ENCODE measurements at regions of chr6 and their contacts with region 1.

Region 1: GRCh38 chr6:72619883-72620696 is 1.8 kb upstream of the KCNQ5 start:
- DNase-seq: peak; percentile 72
- ATAC-seq: peak; percentile 59
- H3K4me3 Mint-ChIP-seq: peak overlapping the region; percentile 89
- H3K27ac Mint-ChIP-seq: peak overlapping the region; percentile 92
- H3K4me1 Mint-ChIP-seq: peaks cover 52% of the 10 kb centered on the region
- H3K27me3 Mint-ChIP-seq: no peaks in the 10 kb centered on the region

Region 2: DNA sequence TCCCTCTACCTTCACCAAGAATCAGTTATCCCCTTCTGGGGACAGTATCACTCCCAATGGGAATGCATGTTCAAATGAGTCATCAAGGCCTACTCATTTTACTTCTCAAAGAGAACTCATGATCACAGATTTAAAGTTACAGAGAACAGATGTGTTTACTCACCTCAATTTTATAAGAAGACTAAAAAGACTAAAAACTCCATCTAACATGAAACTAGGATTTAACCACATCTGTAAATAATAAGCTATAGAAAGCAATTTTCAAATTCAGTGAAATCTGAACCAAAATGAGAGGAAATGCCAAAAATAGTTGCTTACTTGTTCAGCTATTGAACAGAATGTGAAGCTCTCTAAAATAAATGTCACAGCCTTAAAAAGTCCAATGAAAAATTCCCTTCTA is 298.3 kb before region 1 on chr6:
- CTCF ChIA-PET with region 1: no interaction called
- POLR2A ChIA-PET with region 1: no interaction called
- DNase-seq: no peak
- ATAC-seq: no peak
- H3K4me3 Mint-ChIP-seq: no peak overlapping the region
- H3K27ac Mint-ChIP-seq: no peak overlapping the region
- H3K4me1 Mint-ChIP-seq: no peaks in the 10 kb centered on the region
- H3K27me3 Mint-ChIP-seq: no peaks in the 10 kb centered on the region

Region 3: DNA sequence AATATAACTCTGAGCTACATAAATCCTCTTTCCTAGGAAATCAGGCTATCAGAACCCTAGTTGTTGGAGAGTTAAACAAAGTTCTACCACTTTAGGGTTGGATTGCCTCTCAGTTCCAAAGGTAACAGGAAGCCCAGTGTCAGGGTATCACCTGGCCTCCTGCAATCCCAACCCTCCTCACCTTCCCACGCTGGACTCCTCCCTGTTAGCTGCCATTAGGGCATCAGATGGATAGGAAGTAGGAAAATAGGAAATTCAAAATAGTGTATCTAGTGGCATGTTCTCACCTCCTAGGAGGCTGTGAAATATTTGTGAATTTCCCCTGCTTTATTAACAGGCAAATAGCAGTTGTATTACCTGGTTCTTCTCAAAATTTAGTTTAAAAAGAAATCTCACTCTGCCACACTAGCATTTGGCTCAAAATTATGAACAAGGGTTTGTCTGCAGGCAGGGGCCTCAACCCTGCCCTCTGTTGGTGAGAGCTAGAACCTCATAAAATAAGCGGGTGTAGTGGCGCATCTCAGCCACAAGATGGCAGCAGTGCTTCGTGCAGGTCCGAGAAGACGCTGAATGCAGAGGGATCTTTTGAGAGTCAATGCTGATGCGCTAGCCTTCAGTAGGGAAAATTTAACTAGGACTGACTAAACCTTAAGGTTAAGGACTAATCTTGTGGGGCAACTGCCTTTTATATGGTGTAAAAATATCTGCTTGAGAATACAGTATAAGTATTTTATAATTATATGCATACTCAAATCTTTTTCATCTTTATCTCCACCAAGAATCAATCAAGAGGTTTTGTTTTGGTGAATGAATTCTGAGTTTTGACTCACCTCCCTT is 208.0 kb before region 1 on chr6:
- CTCF ChIA-PET with region 1: interaction called, 16 read pairs
- POLR2A ChIA-PET with region 1: no interaction called
- DNase-seq: peak; percentile 78
- ATAC-seq: peak; percentile 75
- H3K4me3 Mint-ChIP-seq: no peak overlapping the region
- H3K27ac Mint-ChIP-seq: no peak overlapping the region
- H3K4me1 Mint-ChIP-seq: no peaks in the 10 kb centered on the region
- H3K27me3 Mint-ChIP-seq: peaks cover 5% of the 10 kb centered on the region

Region 4: GRCh38 chr6:72589096-72589495 is 31.0 kb before region 1 on chr6:
- CTCF ChIA-PET with region 1: interaction called, 16 read pairs
- POLR2A ChIA-PET with region 1: no interaction called
- DNase-seq: no peak
- ATAC-seq: no peak
- H3K4me3 Mint-ChIP-seq: no peak overlapping the region
- H3K27ac Mint-ChIP-seq: no peak overlapping the region
- H3K4me1 Mint-ChIP-seq: no peaks in the 10 kb centered on the region
- H3K27me3 Mint-ChIP-seq: peaks cover 2% of the 10 kb centered on the region

Region 5: DNA sequence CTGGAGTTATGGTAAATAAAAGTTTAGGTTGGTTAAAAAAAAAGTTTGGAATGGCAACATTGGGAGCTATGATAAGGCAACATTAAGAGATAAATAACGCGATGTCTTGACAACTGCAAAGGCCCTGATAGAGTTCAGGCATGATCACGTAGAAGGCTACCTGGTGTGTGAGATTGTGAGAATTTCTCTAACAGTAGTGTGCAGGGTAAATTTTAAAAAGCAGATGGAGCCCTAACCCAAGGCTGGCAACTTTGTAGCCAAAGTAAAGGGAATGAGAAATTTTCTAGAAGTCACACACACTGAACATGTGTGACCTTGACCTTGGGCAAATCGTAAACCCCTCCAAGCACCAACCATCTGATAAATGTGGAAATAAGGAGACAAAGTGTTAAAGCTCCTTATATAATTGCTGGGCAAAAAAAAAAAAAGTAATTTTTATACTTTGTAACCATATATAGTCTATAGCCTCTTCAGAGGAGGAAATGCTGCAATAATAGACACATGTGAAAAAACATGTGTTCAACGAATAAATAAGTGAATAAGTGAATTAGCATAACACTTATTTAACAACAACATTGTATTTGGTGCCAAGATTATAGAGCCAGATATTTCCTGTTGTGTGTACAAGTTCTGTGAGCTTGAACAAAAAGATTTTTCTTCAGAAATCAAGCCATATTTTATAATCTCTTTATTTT is 20.0 kb after region 1 on chr6:
- CTCF ChIA-PET with region 1: interaction called, 12 read pairs
- POLR2A ChIA-PET with region 1: interaction called, 5 read pairs
- DNase-seq: no peak
- ATAC-seq: no peak
- H3K4me3 Mint-ChIP-seq: no peak overlapping the region
- H3K27ac Mint-ChIP-seq: no peak overlapping the region
- H3K4me1 Mint-ChIP-seq: peaks cover 5% of the 10 kb centered on the region
- H3K27me3 Mint-ChIP-seq: no peaks in the 10 kb centered on the region

Region 6: GRCh38 chr6:72669324-72669723 is 49.2 kb after region 1 on chr6:
- CTCF ChIA-PET with region 1: interaction called, 10 read pairs
- POLR2A ChIA-PET with region 1: no interaction called
- DNase-seq: peak; percentile 34
- ATAC-seq: peak; percentile 47
- H3K4me3 Mint-ChIP-seq: no peak overlapping the region
- H3K27ac Mint-ChIP-seq: no peak overlapping the region
- H3K4me1 Mint-ChIP-seq: peaks cover 23% of the 10 kb centered on the region
- H3K27me3 Mint-ChIP-seq: no peaks in the 10 kb centered on the region

Region 7: GRCh38 chr6:73129653-73130443 is 509.8 kb after region 1 on chr6:
- CTCF ChIA-PET with region 1: interaction called, 281 read pairs
- POLR2A ChIA-PET with region 1: no interaction called
- DNase-seq: peak; percentile 88
- ATAC-seq: peak; percentile 96
- H3K4me3 Mint-ChIP-seq: no peak overlapping the region
- H3K27ac Mint-ChIP-seq: no peak overlapping the region
- H3K4me1 Mint-ChIP-seq: peaks cover 3% of the 10 kb centered on the region
- H3K27me3 Mint-ChIP-seq: no peaks in the 10 kb centered on the region

Region 8: GRCh38 chr6:73329201-73329600 is 709.1 kb after region 1 on chr6:
- CTCF ChIA-PET with region 1: interaction called, 16 read pairs
- POLR2A ChIA-PET with region 1: no interaction called
- DNase-seq: no peak
- ATAC-seq: no peak
- H3K4me3 Mint-ChIP-seq: no peak overlapping the region
- H3K27ac Mint-ChIP-seq: no peak overlapping the region
- H3K4me1 Mint-ChIP-seq: no peaks in the 10 kb centered on the region
- H3K27me3 Mint-ChIP-seq: peaks cover 19% of the 10 kb centered on the region